K562 (cell line): ENCODE measurements at regions of chr2 and their contacts with region 1.

Region 1: DNA sequence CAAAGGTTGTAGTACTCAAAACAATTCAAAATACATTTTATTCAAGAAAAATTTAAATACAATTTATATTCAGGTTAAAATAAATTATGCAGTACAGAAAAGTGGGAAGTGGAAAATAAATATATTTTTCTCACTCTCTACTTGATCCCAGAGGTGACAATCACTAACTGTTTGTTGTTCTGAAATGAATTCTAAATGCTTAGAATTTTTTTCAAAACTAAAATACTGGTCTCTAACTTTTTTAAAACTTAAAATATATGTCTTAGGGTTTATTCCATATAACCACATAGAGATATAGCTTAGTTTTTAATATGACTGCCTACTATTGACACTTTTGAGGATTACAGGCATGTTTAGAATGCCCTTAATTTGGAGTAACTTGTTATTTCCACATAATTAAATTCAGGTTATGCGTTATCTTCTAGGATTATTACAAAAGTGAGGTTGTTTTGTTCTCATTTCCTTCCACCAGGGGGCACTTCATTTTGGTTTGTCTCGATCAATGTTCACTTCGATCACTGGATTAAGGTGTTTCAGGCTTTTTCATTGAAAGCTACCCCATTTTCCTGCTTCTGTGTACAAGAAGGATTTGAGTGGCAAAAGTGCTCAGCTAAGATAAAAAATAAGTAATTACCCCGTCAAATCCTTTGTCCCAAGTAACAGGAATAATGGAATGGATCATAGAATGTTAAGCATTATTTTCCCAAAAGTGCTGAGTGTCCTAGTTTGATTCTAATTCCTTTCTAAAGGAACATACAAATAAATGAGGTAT is 27.1 kb upstream of the TFPI start:
- DNase-seq: peak; percentile 31 to 76 (median 47)
- ATAC-seq: peak; percentile 79
- H3K4me3 ChIP-seq: no peak overlapping the region
- H3K27ac ChIP-seq: peak overlapping the region; percentile 47; the same call in 2 of the 3 replicates
- H3K4me1 ChIP-seq: no peaks in the 10 kb centered on the region; a peak in 1 of 5 replicates
- H3K27me3 ChIP-seq: no peaks in the 10 kb centered on the region
- CTCF ChIP-seq: peak; percentile 64 to 75 (median 74); a peak in 5 of 6 replicates
- EP300 ChIP-seq: no peak
- POLR2A ChIP-seq: no peak
- RAD21 ChIP-seq: peak; percentile 67 to 74

Region 2: GRCh38 chr2:186862869-186863709 is 718.2 kb before region 1 on chr2:
- CTCF ChIA-PET with region 1: interaction called, 11 read pairs
- POLR2A ChIA-PET with region 1: no interaction called
- in situ Hi-C with region 1: no loop called
- intact Hi-C with region 1: loop called (anchors 1 kb)
- DNase-seq: peak; percentile 34 to 59 (median 36)
- ATAC-seq: peak; percentile 91
- H3K4me3 ChIP-seq: no peak overlapping the region
- H3K27ac ChIP-seq: no peak overlapping the region
- H3K4me1 ChIP-seq: no peaks in the 10 kb centered on the region
- H3K27me3 ChIP-seq: no peaks in the 10 kb centered on the region
- CTCF ChIP-seq: peak; percentile 47 to 87 (median 50); a peak in 4 of 6 replicates
- EP300 ChIP-seq: no peak
- POLR2A ChIP-seq: no peak
- RAD21 ChIP-seq: peak; percentile 90 to 94

Region 3: GRCh38 chr2:187482796-187483195 is 98.5 kb before region 1 on chr2:
- CTCF ChIA-PET with region 1: no interaction called
- POLR2A ChIA-PET with region 1: no interaction called
- in situ Hi-C with region 1: no loop called
- intact Hi-C with region 1: no loop called
- DNase-seq: no peak
- ATAC-seq: no peak
- H3K4me3 ChIP-seq: no peak overlapping the region
- H3K27ac ChIP-seq: no peak overlapping the region
- H3K4me1 ChIP-seq: no peaks in the 10 kb centered on the region
- H3K27me3 ChIP-seq: no peaks in the 10 kb centered on the region
- CTCF ChIP-seq: no peak
- EP300 ChIP-seq: no peak
- POLR2A ChIP-seq: no peak
- RAD21 ChIP-seq: no peak

Region 4: GRCh38 chr2:187689383-187689782 is 108.1 kb after region 1 on chr2:
- CTCF ChIA-PET with region 1: no interaction called
- POLR2A ChIA-PET with region 1: no interaction called
- in situ Hi-C with region 1: no loop called
- intact Hi-C with region 1: no loop called
- DNase-seq: no peak
- ATAC-seq: no peak
- H3K4me3 ChIP-seq: no peak overlapping the region
- H3K27ac ChIP-seq: no peak overlapping the region
- H3K4me1 ChIP-seq: no peaks in the 10 kb centered on the region
- H3K27me3 ChIP-seq: no peaks in the 10 kb centered on the region
- CTCF ChIP-seq: no peak
- EP300 ChIP-seq: no peak
- POLR2A ChIP-seq: no peak
- RAD21 ChIP-seq: no peak

Region 5: DNA sequence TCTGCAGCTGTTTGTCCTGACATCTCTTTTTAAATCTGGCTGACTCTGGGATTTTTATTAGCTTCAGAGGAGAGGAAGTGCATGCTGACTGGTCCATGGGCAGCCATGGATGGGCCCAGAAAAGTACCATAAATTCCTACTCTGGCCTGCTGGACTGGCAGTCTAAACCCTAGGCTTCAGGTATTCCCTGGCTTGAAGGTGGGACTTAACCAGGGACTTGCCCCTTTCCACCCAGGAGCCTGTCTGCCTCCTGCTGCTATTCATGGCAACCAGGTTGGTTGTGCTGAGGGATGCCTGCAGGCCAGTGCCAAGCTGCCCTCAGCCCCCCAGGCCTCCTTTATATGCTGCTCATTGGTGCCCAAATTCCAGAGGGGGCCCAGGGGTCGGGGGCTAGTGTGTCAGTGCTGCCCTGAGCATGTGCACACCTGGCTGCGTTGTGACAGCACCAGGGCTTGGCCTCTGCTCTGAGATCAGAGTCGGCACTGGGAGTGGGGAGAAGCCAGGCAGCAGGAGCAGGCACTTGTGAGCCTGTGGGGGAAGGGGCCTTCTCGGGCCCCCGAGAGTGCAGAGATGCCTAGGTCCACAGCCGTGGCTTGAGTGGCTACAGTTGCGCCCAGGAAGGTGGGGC is 168.6 kb after region 1 on chr2:
- CTCF ChIA-PET with region 1: no interaction called
- POLR2A ChIA-PET with region 1: no interaction called
- in situ Hi-C with region 1: no loop called
- intact Hi-C with region 1: loop called (anchors 5 kb)
- DNase-seq: no peak
- ATAC-seq: no peak
- H3K4me3 ChIP-seq: no peak overlapping the region
- H3K27ac ChIP-seq: no peak overlapping the region
- H3K4me1 ChIP-seq: no peaks in the 10 kb centered on the region
- H3K27me3 ChIP-seq: no peaks in the 10 kb centered on the region
- CTCF ChIP-seq: no peak
- EP300 ChIP-seq: no peak
- POLR2A ChIP-seq: no peak
- RAD21 ChIP-seq: no peak

Region 6: GRCh38 chr2:188512456-188512855 is 931.1 kb after region 1 on chr2:
- CTCF ChIA-PET with region 1: interaction called, 4 read pairs
- POLR2A ChIA-PET with region 1: no interaction called
- in situ Hi-C with region 1: loop called (anchors 25 kb)
- intact Hi-C with region 1: loop called (anchors 10 kb)
- DNase-seq: peak in 2 of 4 experiments; percentile 4 to 35
- ATAC-seq: peak; percentile 76
- H3K4me3 ChIP-seq: no peak overlapping the region
- H3K27ac ChIP-seq: no peak overlapping the region
- H3K4me1 ChIP-seq: no peaks in the 10 kb centered on the region
- H3K27me3 ChIP-seq: no peaks in the 10 kb centered on the region
- CTCF ChIP-seq: peak in 2 of 3 experiments; percentile 23 to 59; a peak in 3 of 6 replicates
- EP300 ChIP-seq: no peak
- POLR2A ChIP-seq: no peak
- RAD21 ChIP-seq: peak; percentile 72

Region 7: DNA sequence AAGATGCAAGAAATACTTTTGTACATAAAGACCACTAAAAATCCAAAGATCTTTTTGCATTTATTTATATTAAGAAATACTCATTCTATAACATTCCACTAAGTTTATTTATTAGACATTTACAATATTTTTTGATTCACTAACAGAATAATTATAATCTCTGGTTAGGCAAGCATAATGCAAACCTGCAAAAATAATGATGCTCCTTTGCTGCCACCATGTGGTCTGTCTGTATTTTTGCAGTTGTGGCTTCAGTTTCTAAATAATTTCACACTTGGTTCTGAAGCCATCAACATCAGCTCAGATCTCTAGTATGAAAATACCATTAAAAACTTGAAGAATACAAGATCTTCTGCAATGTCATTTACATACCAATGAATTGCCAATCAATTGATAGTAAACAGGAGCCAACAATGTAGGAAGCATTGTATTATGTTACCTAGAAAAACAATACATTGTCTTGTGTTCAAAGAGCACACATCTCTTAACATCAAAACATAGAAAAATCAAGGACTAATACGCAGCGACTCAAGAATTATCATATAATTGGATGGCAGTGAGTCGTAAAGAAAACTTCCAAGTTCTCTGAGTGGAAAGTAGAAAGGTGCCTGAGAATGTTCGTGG is 1831.1 kb after region 1 on chr2:
- CTCF ChIA-PET with region 1: no interaction called
- POLR2A ChIA-PET with region 1: no interaction called
- in situ Hi-C with region 1: no loop called
- intact Hi-C with region 1: loop called (anchors 5 kb)
- DNase-seq: peak; percentile 13 to 43 (median 18)
- ATAC-seq: peak; percentile 71
- H3K4me3 ChIP-seq: no peak overlapping the region
- H3K27ac ChIP-seq: no peak overlapping the region
- H3K4me1 ChIP-seq: no peaks in the 10 kb centered on the region
- H3K27me3 ChIP-seq: no peaks in the 10 kb centered on the region
- CTCF ChIP-seq: peak; percentile 49 to 76 (median 58); a peak in 5 of 6 replicates
- EP300 ChIP-seq: no peak
- POLR2A ChIP-seq: no peak
- RAD21 ChIP-seq: peak; percentile 76 to 78